ENCODE measurements at regions of chr1 and their contacts with region 1.

Region 1: GRCh38 chr1:28581536-28582247 is 10.4 kb upstream of the RAB42 start:
- DNase-seq: peak; percentile 97
- H3K4me3 Mint-ChIP-seq: peak overlapping the region; percentile 91
- H3K27ac Mint-ChIP-seq: peak overlapping the region; percentile 89
- H3K4me1 Mint-ChIP-seq: peaks cover 29% of the 10 kb centered on the region
- H3K27me3 Mint-ChIP-seq: no peaks in the 10 kb centered on the region

Region 2: DNA sequence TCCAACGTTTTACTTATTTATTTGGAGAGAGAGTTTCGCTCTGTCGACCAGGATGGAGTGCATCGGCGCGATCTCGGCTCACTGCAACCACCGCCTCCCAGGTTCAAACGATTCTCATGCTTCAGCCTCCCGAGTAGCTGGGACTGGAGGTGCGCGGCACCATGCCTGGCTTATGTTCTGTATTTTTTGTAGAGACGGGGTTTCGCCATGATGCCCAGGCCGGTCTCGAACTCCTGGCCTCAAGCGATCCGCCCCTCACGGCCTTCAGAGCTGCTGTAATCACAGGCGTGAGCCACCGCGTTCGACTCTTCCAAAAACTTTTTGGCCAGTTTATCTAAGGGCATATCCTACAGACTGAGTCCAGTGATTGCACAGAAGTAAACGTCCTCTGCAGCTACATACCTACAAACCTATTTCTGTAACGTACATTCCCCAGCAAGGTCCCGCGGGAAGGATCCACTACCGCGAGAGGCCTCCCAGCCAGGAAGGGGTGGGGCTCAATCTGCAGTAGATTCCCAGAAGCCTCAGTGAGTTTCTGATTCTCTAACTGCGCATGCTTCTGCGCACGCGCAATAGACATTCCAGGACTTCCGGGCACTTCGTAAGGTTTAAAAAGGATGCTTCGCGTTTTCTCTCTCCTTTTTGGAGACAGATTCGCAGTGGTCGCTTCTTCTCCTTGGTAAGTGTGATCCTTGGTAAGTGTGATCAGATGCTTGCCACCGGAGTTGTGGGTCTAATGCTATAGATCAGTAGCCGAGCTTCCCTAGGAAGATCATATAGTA is 76.1 kb before region 1 on chr1 and contains the start of gene RCC1:
- CTCF ChIA-PET with region 1: interaction called, 5 read pairs
- POLR2A ChIA-PET with region 1: interaction called, 180 read pairs
- intact Hi-C with region 1: loop called (anchors 1 kb)
- DNase-seq: peak; percentile 98
- H3K4me3 Mint-ChIP-seq: peak within 1 kb of the TSS; percentile 97
- H3K27ac Mint-ChIP-seq: peak within 1 kb of the TSS; percentile 97
- H3K4me1 Mint-ChIP-seq: peaks cover 38% of the 10 kb centered on the region
- H3K27me3 Mint-ChIP-seq: peaks cover 6% of the 10 kb centered on the region
- total RNA-seq, gene RCC1: 83.5 to 86.1 TPM

Region 3: GRCh38 chr1:28552758-28553663 is 28.7 kb before region 1 on chr1 and contains the start of gene TRNAU1AP:
- CTCF ChIA-PET with region 1: interaction called, 10 read pairs
- POLR2A ChIA-PET with region 1: interaction called, 86 read pairs
- intact Hi-C with region 1: loop called (anchors 1 kb)
- DNase-seq: peak; percentile 99
- H3K4me3 Mint-ChIP-seq: peak within 1 kb of the TSS; percentile 98
- H3K27ac Mint-ChIP-seq: peak within 1 kb of the TSS; percentile 96
- H3K4me1 Mint-ChIP-seq: peaks cover 17% of the 10 kb centered on the region
- H3K27me3 Mint-ChIP-seq: no peaks in the 10 kb centered on the region
- total RNA-seq, gene TRNAU1AP: 57.3 to 59.6 TPM

Region 4: GRCh38 chr1:28591708-28592320 is 10.1 kb after region 1 on chr1 and contains the start of gene RAB42:
- CTCF ChIA-PET with region 1: interaction called, 7 read pairs
- POLR2A ChIA-PET with region 1: interaction called, 10 read pairs
- intact Hi-C with region 1: no loop called
- DNase-seq: peak; percentile 18
- H3K4me3 Mint-ChIP-seq: peak within 1 kb of the TSS; percentile 67
- H3K27ac Mint-ChIP-seq: no peak within 1 kb of the TSS
- H3K4me1 Mint-ChIP-seq: peaks cover 5% of the 10 kb centered on the region
- H3K27me3 Mint-ChIP-seq: peaks cover 5% of the 10 kb centered on the region
- total RNA-seq, gene RAB42: not detected

Region 5: DNA sequence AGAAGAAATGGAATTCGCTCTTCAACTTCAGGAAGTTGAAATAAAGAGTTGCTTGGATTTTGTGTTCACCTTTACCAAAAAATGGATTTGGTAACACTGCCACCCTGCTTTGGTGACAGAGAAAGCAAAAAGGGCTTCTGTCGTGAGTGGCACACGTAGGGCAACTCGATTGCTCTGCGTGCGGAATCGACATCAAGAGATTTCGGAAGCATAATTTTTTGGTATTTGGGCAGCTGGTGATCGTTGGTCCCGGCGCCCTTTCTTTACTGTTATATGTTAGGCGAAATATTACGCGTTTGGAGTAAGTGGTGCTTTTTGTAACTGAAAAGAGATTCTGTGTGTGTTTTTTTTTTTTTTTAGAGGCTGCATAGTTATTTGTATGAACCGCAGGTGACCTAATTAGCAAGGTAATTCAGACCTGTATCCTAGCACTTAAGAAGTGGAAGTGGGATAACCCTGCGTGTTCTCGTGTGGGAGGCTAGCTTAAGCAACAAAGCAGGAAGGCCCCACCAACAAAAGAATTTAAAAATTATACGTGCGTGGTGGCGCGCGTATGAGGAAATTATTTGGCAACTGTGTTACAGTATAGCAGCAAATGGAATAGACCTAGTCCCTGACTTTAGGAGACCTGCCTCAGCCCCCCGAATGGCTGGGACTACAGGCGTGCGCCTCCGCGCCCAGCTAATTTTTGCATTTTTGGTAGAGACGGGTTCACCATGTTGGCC is 66.9 kb after region 1 on chr1 and contains the start of gene RNU11:
- CTCF ChIA-PET with region 1: interaction called, 4 read pairs
- POLR2A ChIA-PET with region 1: interaction called, 80 read pairs
- intact Hi-C with region 1: loop called (anchors 1 kb)
- DNase-seq: peak; percentile 91
- H3K4me3 Mint-ChIP-seq: peak within 1 kb of the TSS; percentile 93
- H3K27ac Mint-ChIP-seq: peak within 1 kb of the TSS; percentile 99
- H3K4me1 Mint-ChIP-seq: peaks cover 27% of the 10 kb centered on the region
- H3K27me3 Mint-ChIP-seq: no peaks in the 10 kb centered on the region
- total RNA-seq, gene RNU11: not detected

Region 6: DNA sequence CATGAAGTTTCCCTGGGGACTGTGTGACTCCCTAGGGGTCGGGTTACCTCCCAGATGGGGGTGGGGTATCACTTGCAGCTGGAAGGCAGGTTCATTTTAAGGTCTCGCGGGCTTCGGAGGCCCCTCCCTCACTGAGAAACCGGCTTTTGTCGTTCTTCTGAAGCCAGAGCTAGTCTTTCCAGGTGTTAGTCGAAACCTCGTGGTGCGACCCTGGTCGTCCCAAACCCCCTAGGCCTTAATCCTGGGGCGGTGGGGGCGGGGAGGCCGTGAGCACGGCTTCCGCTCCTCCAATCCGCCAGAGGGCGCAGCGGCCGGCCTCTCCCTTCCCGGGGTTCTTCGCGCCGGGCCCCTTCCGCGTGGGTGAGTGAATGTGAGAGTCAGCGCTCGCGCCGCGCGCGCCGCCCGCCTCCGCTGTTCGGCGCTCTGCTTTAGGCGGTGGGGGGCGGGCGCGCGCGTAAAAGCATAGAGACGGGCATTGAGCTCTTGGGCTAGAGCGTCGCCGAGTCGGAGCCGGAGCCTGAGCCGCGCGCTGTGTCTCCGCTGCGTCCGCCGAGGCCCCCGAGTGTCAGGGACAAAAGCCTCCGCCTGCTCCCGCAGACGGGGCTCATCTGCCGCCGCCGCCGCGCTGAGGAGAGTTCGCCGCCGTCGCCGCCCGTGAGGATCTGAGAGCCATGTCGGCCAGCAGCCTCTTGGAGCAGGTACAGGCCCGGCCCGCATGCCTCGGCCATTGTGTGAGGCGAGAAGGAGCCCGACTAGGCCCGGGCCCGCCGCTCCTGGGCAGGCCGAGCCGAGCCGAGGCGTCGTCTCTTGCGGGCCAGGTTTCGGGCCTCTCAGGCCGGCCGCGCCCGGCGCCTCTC is 155.0 kb after region 1 on chr1 and contains the start of gene YTHDF2:
- CTCF ChIA-PET with region 1: interaction called, 13 read pairs
- POLR2A ChIA-PET with region 1: interaction called, 18 read pairs
- intact Hi-C with region 1: loop called (anchors 5 kb)
- DNase-seq: peak; percentile 99
- H3K4me3 Mint-ChIP-seq: peak within 1 kb of the TSS; percentile 83
- H3K27ac Mint-ChIP-seq: peak within 1 kb of the TSS; percentile 85
- H3K4me1 Mint-ChIP-seq: peaks cover 38% of the 10 kb centered on the region
- H3K27me3 Mint-ChIP-seq: no peaks in the 10 kb centered on the region
- total RNA-seq, gene YTHDF2: 74.3 to 80.1 TPM